B cell (primary cell): ENCODE measurements at regions of chr7 and their contacts with region 1.

Region 1: DNA sequence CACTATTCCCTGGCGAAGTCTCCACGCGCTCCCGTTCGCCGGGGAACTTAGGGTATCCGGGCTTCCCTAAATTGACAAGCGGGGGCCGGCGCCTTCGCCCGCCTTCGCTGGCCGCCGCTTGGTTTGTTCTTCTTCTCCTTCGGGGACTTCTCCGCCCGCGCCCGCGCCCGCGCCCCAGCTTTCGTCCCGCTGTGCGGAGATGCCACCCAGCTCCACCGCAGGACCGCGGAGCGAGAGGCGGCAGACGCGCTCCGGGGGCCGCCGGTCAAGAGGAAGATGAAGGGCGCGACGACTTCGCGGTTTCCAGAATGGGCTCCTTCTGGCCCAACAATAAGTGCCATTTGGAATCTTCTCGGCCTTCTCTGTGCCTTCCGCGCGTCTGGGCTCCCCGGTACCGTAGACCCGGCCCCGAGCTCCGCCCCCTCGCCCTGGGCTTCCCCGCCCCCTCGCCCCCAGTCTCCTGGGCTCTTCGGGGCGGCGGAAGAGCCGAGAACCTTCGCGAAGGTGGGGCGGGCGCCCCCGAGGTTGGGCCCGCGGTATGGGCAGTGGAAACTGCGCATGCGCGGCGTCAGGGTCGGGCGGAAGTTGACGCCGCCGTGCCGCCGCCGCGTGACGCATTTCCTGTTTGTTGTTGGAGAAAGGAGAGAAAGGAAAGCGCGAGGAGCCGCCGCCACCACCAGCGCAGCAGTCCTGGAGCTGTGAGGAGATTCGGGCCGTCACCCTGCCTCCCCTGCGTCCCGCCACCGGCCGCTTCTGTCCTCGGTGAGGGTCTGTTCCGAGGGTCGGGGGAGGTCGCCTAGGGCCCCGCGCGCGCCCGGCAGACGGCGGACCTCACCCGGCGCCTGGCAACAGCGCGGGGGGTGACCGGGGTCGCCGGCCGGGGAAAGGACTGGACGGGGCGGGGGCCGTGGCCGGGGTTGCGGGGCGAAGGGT is at the start of gene DNAJB6:
- DNase-seq: peak; percentile 98
- ATAC-seq: peak; percentile 86
- H3K4me3 ChIP-seq: peak within 1 kb of the TSS; percentile 63 to 96 (median 81)
- H3K4me3 Mint-ChIP-seq: peak within 1 kb of the TSS; percentile 99
- H3K27ac ChIP-seq: peak within 1 kb of the TSS; percentile 93 to 94
- H3K27ac Mint-ChIP-seq: peak within 1 kb of the TSS; percentile 100
- H3K4me1 ChIP-seq: peaks cover 39 to 47% of the 10 kb centered on the region in 2 donors
- H3K4me1 Mint-ChIP-seq: peaks cover 65% of the 10 kb centered on the region
- H3K27me3 ChIP-seq: no peaks in the 10 kb centered on the region
- H3K27me3 Mint-ChIP-seq: no peaks in the 10 kb centered on the region
- CTCF ChIP-seq: no peak
- total RNA-seq, gene DNAJB6: 104 and 116 TPM in 2 replicates

Region 2: GRCh38 chr7:156892821-156893706 is 443.6 kb before region 1 on chr7 and contains the start of gene LMBR1:
- CTCF ChIA-PET with region 1: no interaction called
- POLR2A ChIA-PET with region 1: no interaction called
- intact Hi-C with region 1: loop called (anchors 5 kb)
- DNase-seq: peak; percentile 97
- ATAC-seq: peak; percentile 82
- H3K4me3 ChIP-seq: peak within 1 kb of the TSS; percentile 71 to 87 (median 81)
- H3K4me3 Mint-ChIP-seq: peak within 1 kb of the TSS; percentile 93
- H3K27ac ChIP-seq: peak within 1 kb of the TSS; percentile 74 to 86
- H3K27ac Mint-ChIP-seq: peak within 1 kb of the TSS; percentile 94
- H3K4me1 ChIP-seq: peaks cover 5 to 20% of the 10 kb centered on the region in 2 donors
- H3K4me1 Mint-ChIP-seq: peaks cover 36% of the 10 kb centered on the region
- H3K27me3 ChIP-seq: no peaks in the 10 kb centered on the region
- H3K27me3 Mint-ChIP-seq: no peaks in the 10 kb centered on the region
- CTCF ChIP-seq: peak; percentile 43
- total RNA-seq, gene LMBR1: 85.2 and 99.7 TPM in 2 replicates

Region 3: GRCh38 chr7:157250605-157251228 is 85.9 kb before region 1 on chr7:
- CTCF ChIA-PET with region 1: interaction called, 13 read pairs
- POLR2A ChIA-PET with region 1: no interaction called
- intact Hi-C with region 1: loop called (anchors 1 kb)
- DNase-seq: peak; percentile 67
- ATAC-seq: peak; percentile 56
- H3K4me3 ChIP-seq: no peak overlapping the region
- H3K4me3 Mint-ChIP-seq: no peak overlapping the region
- H3K27ac ChIP-seq: no peak overlapping the region
- H3K27ac Mint-ChIP-seq: no peak overlapping the region
- H3K4me1 ChIP-seq: no peaks in the 10 kb centered on the region
- H3K4me1 Mint-ChIP-seq: peaks cover 4% of the 10 kb centered on the region
- H3K27me3 ChIP-seq: no peaks in the 10 kb centered on the region
- H3K27me3 Mint-ChIP-seq: no peaks in the 10 kb centered on the region
- CTCF ChIP-seq: peak; percentile 90

Region 4: DNA sequence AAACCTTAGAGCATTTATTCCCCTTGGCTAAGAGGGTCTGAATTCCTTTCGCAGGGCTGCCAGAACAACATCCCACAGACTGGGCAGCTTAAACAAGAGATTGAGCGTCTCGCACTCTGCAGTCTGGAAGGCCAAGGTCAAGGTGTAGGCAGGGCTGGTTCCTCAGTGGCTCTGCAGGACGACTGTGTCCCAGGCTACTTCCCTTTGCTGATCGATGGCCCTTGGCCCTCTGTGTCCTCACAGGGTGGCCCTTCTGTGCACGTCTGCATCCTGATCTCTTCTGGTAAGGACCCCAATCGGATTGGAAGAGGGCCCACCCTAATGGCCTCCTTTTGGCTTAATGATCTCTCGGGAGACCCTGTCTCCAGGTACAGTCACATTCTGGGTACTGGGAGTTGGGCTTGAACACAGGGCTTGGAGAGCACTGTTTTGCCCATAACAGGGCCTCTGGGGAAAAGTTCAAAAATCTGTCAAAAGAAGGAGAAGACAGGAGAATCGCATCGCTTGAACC is 35.0 kb before region 1 on chr7:
- CTCF ChIA-PET with region 1: interaction called, 5 read pairs
- POLR2A ChIA-PET with region 1: interaction called, 3 read pairs
- intact Hi-C with region 1: loop called (anchors 1 kb)
- DNase-seq: no peak
- ATAC-seq: no peak
- H3K4me3 ChIP-seq: peak overlapping the region in 3 of 5 experiments; percentile 21 to 49 (median 45)
- H3K4me3 Mint-ChIP-seq: peak overlapping the region; percentile 56
- H3K27ac ChIP-seq: peak overlapping the region; percentile 10 to 22
- H3K27ac Mint-ChIP-seq: peak overlapping the region; percentile 68
- H3K4me1 ChIP-seq: peaks cover 13 to 18% of the 10 kb centered on the region in 2 donors
- H3K4me1 Mint-ChIP-seq: peaks cover 20% of the 10 kb centered on the region
- H3K27me3 ChIP-seq: peaks cover 0 to 4% (median 0%) of the 10 kb centered on the region in 4 experiments
- H3K27me3 Mint-ChIP-seq: peaks cover 4% of the 10 kb centered on the region
- CTCF ChIP-seq: no peak

Region 5: GRCh38 chr7:157312941-157313340 is 23.7 kb before region 1 on chr7:
- CTCF ChIA-PET with region 1: no interaction called
- POLR2A ChIA-PET with region 1: no interaction called
- intact Hi-C with region 1: no loop called
- DNase-seq: no peak
- ATAC-seq: no peak
- H3K4me3 ChIP-seq: no peak overlapping the region
- H3K4me3 Mint-ChIP-seq: no peak overlapping the region
- H3K27ac ChIP-seq: no peak overlapping the region
- H3K27ac Mint-ChIP-seq: no peak overlapping the region
- H3K4me1 ChIP-seq: no peaks in the 10 kb centered on the region
- H3K4me1 Mint-ChIP-seq: no peaks in the 10 kb centered on the region
- H3K27me3 ChIP-seq: no peaks in the 10 kb centered on the region
- H3K27me3 Mint-ChIP-seq: no peaks in the 10 kb centered on the region
- CTCF ChIP-seq: no peak

Region 6: DNA sequence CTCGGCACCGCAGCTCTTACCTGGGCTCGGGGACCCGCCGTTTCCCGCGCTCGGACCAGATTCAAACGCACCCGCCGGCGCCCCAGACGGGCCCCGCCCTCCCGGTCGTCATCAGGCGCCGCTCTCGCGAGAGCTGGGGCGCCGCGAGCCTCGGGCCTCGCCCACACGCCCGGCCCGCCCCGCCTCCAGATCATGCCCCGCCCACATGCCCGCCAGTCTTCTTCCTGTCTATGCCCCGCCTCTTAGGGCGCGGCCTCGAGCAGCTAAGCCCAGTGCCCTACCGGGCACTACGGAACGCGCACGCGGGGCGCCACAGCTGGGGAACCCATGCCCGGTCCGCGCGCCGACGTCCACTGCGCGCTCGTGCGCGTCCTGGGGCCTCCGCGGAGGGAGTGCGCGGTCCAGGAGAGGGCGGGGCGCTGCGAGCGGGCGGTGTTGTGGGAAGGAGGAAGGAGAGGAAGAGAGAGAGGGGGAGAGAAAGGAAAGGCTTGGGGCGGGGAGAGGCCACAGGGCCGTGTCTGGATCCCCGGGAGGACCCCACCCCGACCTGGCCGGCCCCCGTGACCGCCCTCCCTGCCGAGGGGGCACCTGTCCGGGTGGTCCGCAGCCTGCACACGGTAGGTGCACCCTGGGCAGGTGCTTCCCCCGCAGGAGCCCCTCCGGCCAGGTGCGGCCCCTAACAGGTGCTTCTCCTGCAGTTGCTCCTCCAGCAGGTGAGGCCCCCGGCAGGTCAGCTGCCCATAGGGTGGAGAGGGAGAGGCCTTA is 1368.2 kb after region 1 on chr7 and contains the start of gene NCAPG2:
- CTCF ChIA-PET with region 1: no interaction called
- POLR2A ChIA-PET with region 1: interaction called, 18 read pairs
- intact Hi-C with region 1: no loop called
- DNase-seq: peak; percentile 98
- ATAC-seq: peak; percentile 97
- H3K4me3 ChIP-seq: peak within 1 kb of the TSS; percentile 24 to 88 (median 81)
- H3K4me3 Mint-ChIP-seq: peak within 1 kb of the TSS; percentile 92
- H3K27ac ChIP-seq: peak within 1 kb of the TSS; percentile 36 to 85
- H3K27ac Mint-ChIP-seq: peak within 1 kb of the TSS; percentile 94
- H3K4me1 ChIP-seq: peaks cover 6 to 12% of the 10 kb centered on the region in 2 donors
- H3K4me1 Mint-ChIP-seq: peaks cover 16% of the 10 kb centered on the region
- H3K27me3 ChIP-seq: no peaks in the 10 kb centered on the region
- H3K27me3 Mint-ChIP-seq: no peaks in the 10 kb centered on the region
- CTCF ChIP-seq: peak; percentile 28
- total RNA-seq, gene NCAPG2: 9.8 and 11.4 TPM in 2 replicates